ENCODE measurements at regions of chr11 and their contacts with region 1.

Region 1: GRCh38 chr11:131674051-131674755 is 303.8 kb downstream of the NTM start:
- DNase-seq: peak; percentile 75
- CTCF ChIP-seq: peak; percentile 91

Region 2: GRCh38 chr11:131121426-131122333 is 552.5 kb before region 1 on chr11:
- CTCF ChIA-PET with region 1: no interaction called
- POLR2A ChIA-PET with region 1: no interaction called
- DNase-seq: no peak
- CTCF ChIP-seq: no peak

Region 3: GRCh38 chr11:131579932-131580387 is 94.2 kb before region 1 on chr11:
- CTCF ChIA-PET with region 1: interaction called, 134 read pairs
- POLR2A ChIA-PET with region 1: no interaction called
- DNase-seq: peak; percentile 55
- CTCF ChIP-seq: peak; percentile 59

Region 4: DNA sequence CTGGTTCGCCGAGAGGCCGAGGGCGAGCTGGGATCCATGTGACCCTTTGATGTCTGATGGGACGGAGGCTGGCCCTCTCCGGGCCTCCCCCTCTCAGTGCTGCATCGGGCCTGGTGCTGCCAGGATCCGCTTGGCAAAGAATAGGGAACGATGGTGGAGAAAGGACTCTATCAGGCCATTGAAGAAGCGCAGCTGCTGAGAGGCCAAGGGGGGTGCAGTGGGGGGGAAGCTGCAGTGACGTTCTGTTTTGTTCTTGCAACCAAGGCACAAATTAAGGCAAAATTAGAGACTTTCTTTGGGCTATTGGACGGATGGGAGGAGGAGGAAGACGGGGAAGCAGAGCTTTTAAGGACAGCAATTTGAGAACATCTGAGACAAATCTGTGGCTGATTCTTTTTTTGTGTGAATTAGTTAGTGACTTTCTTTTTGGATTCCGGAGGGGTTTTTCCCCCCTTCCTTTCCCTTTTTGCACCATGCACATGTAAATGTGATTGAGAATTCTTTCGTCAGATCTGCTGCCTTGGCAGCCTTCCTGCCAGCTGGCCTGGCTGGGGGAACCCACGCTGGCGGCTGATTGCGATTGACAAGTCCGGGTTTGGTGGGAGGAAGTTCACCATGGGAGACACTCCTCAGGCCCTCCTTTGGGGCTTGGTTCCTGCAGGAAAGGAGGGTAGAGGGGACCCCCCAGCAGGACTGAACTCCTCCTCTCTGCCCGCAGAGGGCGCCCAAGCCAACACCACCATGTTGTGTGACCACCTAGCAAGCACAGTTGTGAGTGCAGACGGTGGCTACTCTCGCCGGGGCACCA is 89.2 kb before region 1 on chr11:
- CTCF ChIA-PET with region 1: interaction called, 134 read pairs
- POLR2A ChIA-PET with region 1: no interaction called
- DNase-seq: peak; percentile 25
- CTCF ChIP-seq: peak; percentile 24

Region 5: DNA sequence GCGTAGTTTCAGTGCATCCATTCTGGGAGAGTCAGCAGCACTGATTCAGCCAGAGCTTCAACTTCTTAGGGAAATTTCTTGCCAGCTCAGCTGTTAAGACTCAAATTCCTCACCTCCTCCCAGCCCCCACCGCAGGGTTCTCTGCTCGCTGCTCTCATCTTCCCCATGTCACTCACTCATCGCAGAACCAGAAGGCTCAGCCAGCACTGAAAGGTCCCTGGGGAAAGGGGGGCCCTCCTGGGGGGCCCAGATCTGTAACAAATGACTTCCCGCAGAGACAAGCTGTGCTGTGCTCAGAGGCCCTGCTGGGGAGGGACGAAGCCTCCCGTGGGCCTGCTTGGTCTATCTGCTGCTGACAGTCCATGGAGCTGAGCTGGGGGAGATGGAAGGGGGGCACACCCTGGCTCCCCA is 83.1 kb before region 1 on chr11:
- CTCF ChIA-PET with region 1: interaction called, 22 read pairs
- POLR2A ChIA-PET with region 1: no interaction called
- DNase-seq: no peak
- CTCF ChIP-seq: no peak

Region 6: GRCh38 chr11:131658952-131659351 is 15.3 kb before region 1 on chr11:
- CTCF ChIA-PET with region 1: interaction called, 35 read pairs
- POLR2A ChIA-PET with region 1: no interaction called
- DNase-seq: peak; percentile 50
- CTCF ChIP-seq: no peak

Region 7: GRCh38 chr11:131688051-131688698 is 14.0 kb after region 1 on chr11:
- CTCF ChIA-PET with region 1: interaction called, 32 read pairs
- POLR2A ChIA-PET with region 1: no interaction called
- DNase-seq: peak; percentile 86
- CTCF ChIP-seq: peak; percentile 83

Region 8: DNA sequence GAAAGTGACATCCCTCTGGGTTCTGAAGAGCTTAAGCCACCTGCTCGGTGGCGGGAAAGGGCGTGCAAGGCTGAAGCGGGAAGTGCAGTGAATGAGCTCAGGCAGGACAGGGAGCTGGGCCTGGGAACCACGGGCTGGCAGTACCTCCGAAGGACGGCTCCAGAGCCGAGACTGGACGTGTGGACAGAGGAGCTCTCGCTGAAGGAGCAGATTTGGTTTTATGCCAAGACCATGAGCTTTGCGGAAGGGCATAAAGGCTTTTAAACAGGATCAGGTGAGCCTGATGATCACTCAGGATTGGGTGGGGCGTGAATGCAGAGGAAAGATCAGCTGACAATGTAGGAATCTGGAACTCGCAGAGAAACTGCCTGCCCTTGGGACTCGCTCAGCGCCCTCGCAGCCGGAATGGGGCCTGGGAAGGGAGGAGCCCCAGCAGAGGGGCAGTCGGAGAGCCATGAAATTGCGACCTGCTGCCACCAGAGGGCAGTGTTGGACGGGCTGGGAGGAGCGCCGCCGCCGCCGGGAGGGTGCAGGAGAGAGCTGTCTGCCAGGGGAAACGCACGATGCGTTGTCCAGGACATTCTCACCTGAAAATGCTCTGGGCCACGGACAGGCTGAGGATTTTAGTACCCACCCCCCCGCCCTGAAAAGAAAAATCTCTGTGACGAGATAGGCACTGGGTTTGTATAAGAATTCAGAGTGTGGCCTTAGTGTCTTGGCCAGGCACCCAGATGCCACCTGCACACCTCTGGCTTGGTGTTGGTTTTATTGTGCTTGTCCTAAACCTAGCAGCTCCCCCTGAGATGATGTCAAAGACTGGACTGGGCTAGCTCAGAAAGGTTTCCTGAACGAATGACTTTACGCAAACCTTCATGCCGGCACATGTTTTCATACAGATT is 20.6 kb after region 1 on chr11:
- CTCF ChIA-PET with region 1: interaction called, 15 read pairs
- POLR2A ChIA-PET with region 1: no interaction called
- DNase-seq: peak; percentile 84
- CTCF ChIP-seq: peak; percentile 92